Activated T-helper 1 cell treated with anti-CD3 and anti-CD28 coated beads, Interleukin-12 subunit alpha, Interleukin-12 subunit beta, Interleukin-2, Interleukin-4 antibody, amounts not matched to agents 30 ng/mL and 10 ng/mL and 1 ng/mL, durations not matched to agents 14 hours and 24 hours and 36 hours (primary cell): ENCODE measurements at regions of chr14 and their contacts with region 1.

Region 1: DNA sequence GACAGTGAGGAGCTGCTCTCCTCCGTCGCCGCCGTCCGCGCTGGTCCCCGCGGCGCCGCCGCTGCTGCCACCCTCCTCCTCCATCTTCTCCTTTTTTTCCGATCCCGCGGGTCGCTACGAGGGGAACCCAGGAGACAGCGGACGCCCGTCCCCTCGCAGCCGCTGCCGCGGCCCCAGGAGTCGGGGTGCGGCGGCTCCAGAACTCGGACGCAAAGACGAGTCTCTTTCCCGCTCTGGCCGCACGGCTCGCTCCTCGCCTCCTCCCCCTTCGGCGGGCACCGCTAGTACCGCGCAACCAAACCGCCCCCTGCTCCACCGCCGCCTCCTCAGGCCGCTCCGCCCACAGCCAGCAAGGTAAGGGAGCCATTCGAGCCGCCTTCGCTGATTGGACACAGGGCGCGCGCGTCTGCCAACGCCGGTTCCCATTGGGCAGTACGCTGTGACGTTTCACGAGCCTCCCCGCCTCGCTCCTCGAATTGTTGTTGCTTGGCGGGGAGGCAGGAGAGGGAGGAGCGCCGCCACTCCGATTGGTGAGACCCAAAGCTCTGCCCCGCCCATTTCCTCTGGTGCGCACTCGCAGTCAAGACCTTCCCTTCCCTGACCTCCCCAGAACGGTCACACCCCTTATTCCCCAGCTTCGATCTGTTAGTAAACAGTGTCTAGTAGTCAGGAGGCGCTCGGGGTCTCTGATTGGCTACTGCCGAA is at the start of gene RPS6KA5:
- DNase-seq: peak; percentile 100
- H3K4me3 Mint-ChIP-seq: peak within 1 kb of the TSS; percentile 84
- H3K27ac Mint-ChIP-seq: peak within 1 kb of the TSS; percentile 40
- H3K4me1 Mint-ChIP-seq: peaks cover 62% of the 10 kb centered on the region
- H3K27me3 Mint-ChIP-seq: no peaks in the 10 kb centered on the region
- total RNA-seq, gene RPS6KA5: 16.6 and 16.7 TPM in 2 replicates

Region 2: DNA sequence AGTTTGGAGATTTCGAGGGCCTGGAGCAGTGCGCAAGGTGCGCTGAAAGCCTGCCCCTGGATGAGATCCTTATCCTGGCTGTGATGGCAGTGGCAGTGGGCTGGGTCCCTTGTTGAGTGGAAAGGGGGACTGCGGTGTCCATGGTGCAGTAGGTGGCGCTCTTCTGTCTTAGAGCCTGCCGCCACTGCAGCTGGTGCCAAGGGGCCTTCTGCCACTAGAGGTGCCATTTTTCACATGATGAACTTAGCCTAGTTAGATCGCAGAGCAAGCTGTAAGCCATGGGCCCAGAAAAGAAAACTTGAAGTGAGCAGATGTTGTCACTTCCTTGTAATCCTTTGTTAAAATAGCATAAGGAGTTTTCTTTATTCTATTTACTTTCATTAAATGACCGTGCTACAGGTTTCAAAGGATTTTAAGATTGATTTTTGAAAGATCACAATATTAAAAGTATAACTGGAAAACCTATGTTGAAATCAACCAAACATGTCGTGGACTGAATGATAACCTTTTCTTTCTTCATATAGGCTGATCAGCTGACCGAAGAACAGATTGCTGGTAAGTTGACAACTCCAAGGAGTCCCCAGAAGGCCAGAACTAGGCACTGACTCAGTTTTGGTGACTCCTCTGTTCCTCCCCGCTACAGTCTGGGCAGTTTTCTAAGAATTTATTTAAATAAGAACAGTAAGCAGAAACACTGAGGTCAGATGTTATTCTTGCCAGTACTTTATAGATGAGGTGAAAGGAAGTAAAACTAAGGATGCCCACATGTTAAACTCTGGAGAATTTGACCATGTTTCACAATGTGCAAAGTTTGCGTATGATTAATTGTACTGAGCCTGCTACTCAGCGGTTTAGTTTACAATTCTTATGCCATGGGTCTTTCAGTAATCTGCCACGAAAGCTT is 660.7 kb before region 1 on chr14:
- intact Hi-C with region 1: loop called (anchors 5 kb)
- DNase-seq: peak; percentile 79
- H3K4me3 Mint-ChIP-seq: peak overlapping the region; percentile 96
- H3K27ac Mint-ChIP-seq: peak overlapping the region; percentile 73
- H3K4me1 Mint-ChIP-seq: peaks cover 70% of the 10 kb centered on the region
- H3K27me3 Mint-ChIP-seq: peaks cover 2% of the 10 kb centered on the region

Region 3: GRCh38 chr14:90970167-90970600 is 90.3 kb before region 1 on chr14:
- intact Hi-C with region 1: loop called (anchors 1 kb)
- DNase-seq: no peak
- H3K4me3 Mint-ChIP-seq: peak overlapping the region; percentile 71
- H3K27ac Mint-ChIP-seq: peak overlapping the region; percentile 90
- H3K4me1 Mint-ChIP-seq: peaks cover 50% of the 10 kb centered on the region
- H3K27me3 Mint-ChIP-seq: no peaks in the 10 kb centered on the region

Region 4: GRCh38 chr14:91078095-91078737 is 17.7 kb after region 1 on chr14:
- intact Hi-C with region 1: loop called (anchors 1 kb)
- DNase-seq: peak; percentile 68
- H3K4me3 Mint-ChIP-seq: peak overlapping the region; percentile 51
- H3K27ac Mint-ChIP-seq: peak overlapping the region; percentile 85
- H3K4me1 Mint-ChIP-seq: peaks cover 63% of the 10 kb centered on the region
- H3K27me3 Mint-ChIP-seq: peaks cover 6% of the 10 kb centered on the region

Region 5: DNA sequence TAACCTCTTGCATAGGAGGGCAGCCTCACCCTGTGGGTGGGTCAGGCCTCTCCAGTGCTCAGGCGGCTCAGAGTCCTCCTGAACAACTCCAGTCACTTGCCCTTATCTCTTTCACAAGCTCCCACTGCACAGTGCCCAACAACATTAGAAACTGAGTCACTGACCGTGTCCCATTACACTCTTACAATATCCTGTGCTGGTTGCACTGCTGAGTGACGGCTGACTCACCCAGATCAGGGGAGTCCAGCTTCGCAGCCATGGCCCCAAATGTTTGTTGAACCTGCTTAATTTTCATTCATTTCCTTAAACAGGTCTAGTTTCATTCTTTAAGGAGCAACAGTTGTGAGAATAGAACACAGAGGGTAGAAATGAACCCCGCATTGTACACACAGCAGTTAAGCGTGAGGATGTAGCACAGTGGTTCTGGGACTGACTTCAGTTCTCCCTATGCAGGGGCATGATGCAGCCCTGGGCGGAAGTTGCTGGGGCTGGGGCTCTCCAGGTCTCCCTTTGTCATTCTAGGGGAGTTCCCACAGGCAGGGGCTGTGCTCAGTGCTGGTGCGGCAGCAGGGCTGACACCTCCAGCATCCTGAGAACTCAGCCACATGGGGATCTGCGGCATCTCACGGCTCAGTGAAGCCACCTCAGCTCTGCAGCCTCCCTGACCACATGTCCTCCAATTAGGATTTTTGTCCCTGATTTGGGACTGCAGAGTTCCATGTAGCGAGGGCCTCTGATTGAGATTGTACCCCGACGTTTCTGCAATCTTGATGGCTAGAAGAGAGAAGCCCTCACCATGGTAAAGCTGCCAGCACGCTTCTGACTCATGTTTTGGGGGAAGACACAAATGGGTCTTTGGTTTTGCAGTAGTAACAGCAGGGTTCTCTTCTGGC is 167.9 kb after region 1 on chr14:
- intact Hi-C with region 1: loop called (anchors 1 kb)
- DNase-seq: peak; percentile 87
- H3K4me3 Mint-ChIP-seq: peak overlapping the region; percentile 80
- H3K27ac Mint-ChIP-seq: peak overlapping the region; percentile 100
- H3K4me1 Mint-ChIP-seq: peaks cover 89% of the 10 kb centered on the region
- H3K27me3 Mint-ChIP-seq: no peaks in the 10 kb centered on the region

Region 6: GRCh38 chr14:91418387-91419043 is 358.0 kb after region 1 on chr14:
- intact Hi-C with region 1: loop called (anchors 2 kb)
- DNase-seq: peak; percentile 71
- H3K4me3 Mint-ChIP-seq: peak overlapping the region; percentile 77
- H3K27ac Mint-ChIP-seq: peak overlapping the region; percentile 77
- H3K4me1 Mint-ChIP-seq: peaks cover 42% of the 10 kb centered on the region
- H3K27me3 Mint-ChIP-seq: peaks cover 3% of the 10 kb centered on the region